Left cardiac atrium (tissue), 4 donors: ENCODE measurements at regions of chr18 and their contacts with region 1.

Region 1: GRCh38 chr18:74869904-74870863 is 272.5 kb downstream of the ZNF407 start:
- DNase-seq: no peak
- ATAC-seq: no peak

Region 2: DNA sequence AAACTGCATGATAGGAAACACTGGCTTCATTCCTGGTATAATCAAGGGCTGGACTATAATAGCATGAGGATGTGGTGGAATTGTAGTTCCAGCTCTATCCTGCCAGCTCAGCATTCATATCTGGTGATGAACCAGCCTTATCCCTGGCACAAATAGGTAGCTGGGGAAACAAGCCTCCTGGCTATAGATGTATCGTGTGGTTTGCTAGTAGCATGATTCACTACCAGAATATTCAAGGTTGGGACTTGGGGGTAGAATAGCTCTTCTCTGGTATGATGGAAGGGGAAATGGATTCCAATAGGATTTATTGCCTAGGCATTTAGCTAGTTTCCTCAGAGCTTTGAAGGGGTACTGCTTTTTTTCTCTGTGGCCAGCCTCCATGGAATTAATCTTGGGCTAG is 1255.4 kb before region 1 on chr18:
- intact Hi-C with region 1: no loop called
- DNase-seq: no peak
- ATAC-seq: peak in 1 of 2 donors; percentile 90

Region 3: DNA sequence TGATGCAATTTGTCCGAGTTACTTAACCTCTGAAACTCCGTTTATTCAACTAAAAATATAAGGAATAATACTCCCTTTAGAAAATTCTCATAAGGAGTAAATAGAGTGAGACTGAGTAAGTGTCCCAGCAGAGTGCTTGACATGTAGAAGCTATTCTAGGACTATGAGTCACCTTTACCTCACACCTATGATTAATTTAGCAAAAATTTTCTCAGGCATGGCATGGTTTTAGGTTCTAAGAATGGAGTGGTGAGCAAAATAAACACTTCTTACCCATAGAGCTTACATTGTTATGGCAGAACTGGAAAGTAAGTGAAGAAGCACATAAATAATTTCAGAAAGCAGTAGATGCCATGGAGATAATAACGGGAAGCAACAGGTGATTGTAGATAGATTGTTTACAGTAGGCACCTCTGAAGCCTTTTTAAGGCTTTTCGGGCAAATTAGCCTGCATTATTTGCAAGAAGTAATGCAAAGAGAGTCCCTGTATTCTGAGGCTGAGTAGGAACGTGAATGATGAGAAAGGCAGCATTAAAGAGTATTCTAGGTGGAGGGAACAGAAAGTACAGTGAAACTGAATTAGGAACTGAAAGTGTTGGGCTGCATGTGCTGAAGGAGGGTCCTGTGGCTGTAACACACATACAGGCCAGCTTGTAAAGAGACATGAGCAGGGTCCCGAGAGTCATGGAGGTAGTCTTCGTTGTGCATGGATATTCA is 63.3 kb before region 1 on chr18:
- intact Hi-C with region 1: loop called in 1 of 2 experiments (anchors 10 kb)
- DNase-seq: no peak
- ATAC-seq: peak; percentile 68 to 96

Region 4: DNA sequence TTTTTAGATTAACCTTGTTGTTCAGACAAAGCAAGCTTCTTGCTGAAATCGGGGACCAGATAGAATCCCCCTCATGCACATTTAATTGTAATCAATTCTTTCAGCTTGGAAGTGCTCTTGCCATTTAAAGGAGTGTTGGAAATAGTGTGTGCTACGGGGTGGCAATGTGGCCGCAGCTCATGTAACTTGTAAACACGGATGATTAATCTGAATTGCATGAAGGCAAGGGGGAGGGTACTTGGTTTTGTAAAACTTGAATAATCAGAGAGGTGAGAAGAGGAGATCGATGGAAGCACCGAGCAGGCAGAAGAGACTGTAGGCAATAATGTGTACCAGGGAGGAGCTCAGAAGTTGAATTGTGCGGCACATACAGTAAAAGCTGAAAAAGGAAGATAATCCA is 65.2 kb after region 1 on chr18:
- intact Hi-C with region 1: no loop called
- DNase-seq: no peak
- ATAC-seq: no peak